ENCODE measurements at regions of chr1 and their contacts with region 1.

Region 1: GRCh38 chr1:40257688-40258444 is at the start of gene ZMPSTE24:
- DNase-seq: peak; percentile 94
- H3K4me3 Mint-ChIP-seq: peak within 1 kb of the TSS; percentile 96
- H3K27ac Mint-ChIP-seq: peak within 1 kb of the TSS; percentile 99
- H3K4me1 Mint-ChIP-seq: peaks cover 55% of the 10 kb centered on the region
- H3K27me3 Mint-ChIP-seq: no peaks in the 10 kb centered on the region
- total RNA-seq, gene ZMPSTE24: 50.2 and 56.0 TPM in 2 replicates

Region 2: GRCh38 chr1:39954816-39955546 is 302.9 kb before region 1 on chr1 and contains the start of gene MFSD2A:
- intact Hi-C with region 1: loop called (anchors 5 kb)
- DNase-seq: peak; percentile 80
- H3K4me3 Mint-ChIP-seq: peak within 1 kb of the TSS; percentile 98
- H3K27ac Mint-ChIP-seq: peak within 1 kb of the TSS; percentile 94
- H3K4me1 Mint-ChIP-seq: peaks cover 49% of the 10 kb centered on the region
- H3K27me3 Mint-ChIP-seq: no peaks in the 10 kb centered on the region
- total RNA-seq, gene MFSD2A: 55.3 and 56.2 TPM in 2 replicates

Region 3: DNA sequence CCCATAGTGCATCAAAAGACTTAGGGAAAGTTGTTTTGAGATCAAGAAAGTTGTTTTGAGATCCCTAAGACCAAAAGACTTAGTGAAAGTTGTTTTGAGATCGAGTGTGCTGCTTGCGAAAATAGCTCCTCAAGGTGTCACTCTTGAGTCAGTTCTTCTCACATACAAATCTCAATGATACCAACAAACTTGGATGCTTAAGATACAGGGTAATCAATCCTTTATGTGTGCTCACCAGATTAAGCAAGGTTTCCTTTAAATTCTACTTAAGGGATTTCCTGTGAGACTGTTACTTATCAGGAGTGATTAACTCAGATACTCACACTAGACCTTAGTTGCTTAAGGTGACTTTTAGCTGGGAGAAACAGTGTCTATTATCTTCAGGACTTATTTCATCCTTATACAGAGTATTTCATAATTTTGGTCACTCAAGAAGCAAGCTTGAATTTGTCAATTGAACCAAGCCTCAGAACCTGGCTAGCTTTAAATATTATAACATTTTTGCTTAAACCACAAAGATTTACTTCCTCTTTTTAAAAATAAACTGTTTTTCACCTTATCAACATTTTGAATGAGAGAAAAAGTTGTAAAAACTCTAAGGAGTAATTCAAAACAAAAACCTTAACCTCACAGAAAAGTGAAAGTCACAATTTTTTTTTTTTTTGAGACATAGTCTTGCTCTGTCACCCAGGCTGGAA is 104.6 kb before region 1 on chr1:
- intact Hi-C with region 1: loop called (anchors 2 kb)
- DNase-seq: peak; percentile 21
- H3K4me3 Mint-ChIP-seq: no peak overlapping the region
- H3K27ac Mint-ChIP-seq: peak overlapping the region; percentile 21
- H3K4me1 Mint-ChIP-seq: peaks cover 13% of the 10 kb centered on the region
- H3K27me3 Mint-ChIP-seq: peaks cover 12% of the 10 kb centered on the region

Region 4: GRCh38 chr1:40224040-40224439 is 33.8 kb before region 1 on chr1:
- intact Hi-C with region 1: loop called (anchors 2 kb)
- DNase-seq: no peak
- H3K4me3 Mint-ChIP-seq: no peak overlapping the region
- H3K27ac Mint-ChIP-seq: peak overlapping the region; percentile 43
- H3K4me1 Mint-ChIP-seq: peaks cover 26% of the 10 kb centered on the region
- H3K27me3 Mint-ChIP-seq: no peaks in the 10 kb centered on the region

Region 5: GRCh38 chr1:40315239-40315794 is 57.5 kb after region 1 on chr1:
- intact Hi-C with region 1: loop called (anchors 1 kb)
- DNase-seq: peak; percentile 77
- H3K4me3 Mint-ChIP-seq: peak overlapping the region; percentile 78
- H3K27ac Mint-ChIP-seq: peak overlapping the region; percentile 23
- H3K4me1 Mint-ChIP-seq: peaks cover 49% of the 10 kb centered on the region
- H3K27me3 Mint-ChIP-seq: peaks cover 13% of the 10 kb centered on the region

Region 6: DNA sequence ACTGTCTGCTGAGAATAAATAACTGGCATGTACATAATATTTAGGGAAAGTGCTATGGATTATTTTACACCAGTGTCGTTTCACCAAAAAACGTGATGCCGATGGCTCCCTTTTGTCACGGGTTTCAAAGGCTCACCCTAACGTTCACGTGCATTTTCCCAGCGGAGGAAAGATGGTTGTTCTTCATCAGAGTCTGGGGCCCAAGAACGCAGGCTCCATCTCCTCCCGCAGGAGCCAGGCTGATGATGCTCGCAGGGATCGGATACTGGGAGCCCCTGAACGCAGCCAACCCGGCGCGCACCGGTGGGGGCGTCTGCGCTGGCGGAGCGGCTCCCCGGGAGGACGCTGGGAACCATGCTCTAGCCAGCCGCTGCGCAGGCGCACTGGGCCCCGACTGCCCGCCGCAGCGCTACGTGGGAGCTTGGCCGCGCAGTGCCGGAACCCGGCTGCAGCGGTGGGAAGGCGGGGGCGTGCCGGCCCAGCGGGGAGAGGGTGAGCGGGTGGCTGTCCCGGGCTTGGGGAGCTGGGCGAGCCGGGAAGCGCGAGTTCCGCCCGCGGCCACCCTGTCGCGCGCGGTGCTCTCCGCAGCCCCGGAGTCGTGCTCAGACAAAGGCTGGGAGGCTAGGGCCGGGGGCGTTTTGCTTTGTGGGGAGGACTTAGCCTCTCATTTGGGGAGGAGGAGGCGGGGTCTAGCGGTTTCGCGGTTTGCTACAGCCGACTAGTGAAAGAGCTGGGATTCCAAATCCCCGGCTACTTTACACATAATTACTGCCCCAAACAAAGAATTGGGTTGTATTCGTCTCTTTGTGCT is 192.0 kb after region 1 on chr1 and contains the start of gene ZFP69B:
- intact Hi-C with region 1: loop called (anchors 2 kb)
- DNase-seq: peak; percentile 86
- H3K4me3 Mint-ChIP-seq: peak within 1 kb of the TSS; percentile 84
- H3K27ac Mint-ChIP-seq: peak within 1 kb of the TSS; percentile 90
- H3K4me1 Mint-ChIP-seq: peaks cover 35% of the 10 kb centered on the region
- H3K27me3 Mint-ChIP-seq: no peaks in the 10 kb centered on the region
- total RNA-seq, gene ZFP69B: 5.1 and 5.8 TPM in 2 replicates

Measured in activated T-helper 1 cell treated with anti-CD3 and anti-CD28 coated beads, Interleukin-12 subunit alpha, Interleukin-12 subunit beta, Interleukin-2, Interleukin-4 antibody, amounts not matched to agents 30 ng/mL and 10 ng/mL and 1 ng/mL, durations not matched to agents 14 hours and 24 hours and 36 hours (primary cell).